Sciatic nerve (tissue), 2 donors: ENCODE measurements at regions of chr19 and their contacts with region 1.

Region 1: DNA sequence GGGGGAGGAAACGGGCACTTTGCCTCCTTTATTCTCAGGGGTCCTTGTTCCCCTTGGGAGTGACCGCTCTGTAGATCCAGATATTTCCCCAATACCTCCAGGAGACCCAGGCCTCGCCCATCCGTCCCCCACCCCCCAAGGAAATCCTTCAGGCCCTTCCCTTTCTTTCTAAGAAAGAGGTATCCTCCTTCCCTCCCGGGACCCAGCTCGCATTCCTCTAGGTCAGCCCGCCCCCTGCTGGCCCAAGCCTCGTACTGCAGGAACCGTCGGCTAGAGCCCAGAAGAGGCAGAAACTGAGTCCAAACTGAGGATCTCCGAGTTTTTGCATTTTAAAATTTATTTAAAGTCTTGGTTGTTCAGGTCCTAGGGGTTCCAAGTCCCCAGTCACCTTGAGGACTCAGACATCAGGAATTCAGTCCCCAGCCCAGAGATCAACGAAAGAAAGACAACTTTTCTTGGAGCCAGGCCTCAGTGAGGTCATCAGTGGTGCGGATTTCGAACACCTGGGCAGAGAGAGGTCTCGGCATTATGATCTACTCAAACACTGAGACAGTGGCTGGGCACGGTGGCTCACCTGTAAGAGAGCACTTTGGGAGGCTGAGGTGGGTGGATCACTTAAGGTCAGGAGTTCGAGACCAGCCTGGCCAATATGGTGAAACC is 7.5 kb upstream of the LRFN1 start:
- DNase-seq: peak; percentile 95
- ATAC-seq: peak; percentile 92

Region 2: DNA sequence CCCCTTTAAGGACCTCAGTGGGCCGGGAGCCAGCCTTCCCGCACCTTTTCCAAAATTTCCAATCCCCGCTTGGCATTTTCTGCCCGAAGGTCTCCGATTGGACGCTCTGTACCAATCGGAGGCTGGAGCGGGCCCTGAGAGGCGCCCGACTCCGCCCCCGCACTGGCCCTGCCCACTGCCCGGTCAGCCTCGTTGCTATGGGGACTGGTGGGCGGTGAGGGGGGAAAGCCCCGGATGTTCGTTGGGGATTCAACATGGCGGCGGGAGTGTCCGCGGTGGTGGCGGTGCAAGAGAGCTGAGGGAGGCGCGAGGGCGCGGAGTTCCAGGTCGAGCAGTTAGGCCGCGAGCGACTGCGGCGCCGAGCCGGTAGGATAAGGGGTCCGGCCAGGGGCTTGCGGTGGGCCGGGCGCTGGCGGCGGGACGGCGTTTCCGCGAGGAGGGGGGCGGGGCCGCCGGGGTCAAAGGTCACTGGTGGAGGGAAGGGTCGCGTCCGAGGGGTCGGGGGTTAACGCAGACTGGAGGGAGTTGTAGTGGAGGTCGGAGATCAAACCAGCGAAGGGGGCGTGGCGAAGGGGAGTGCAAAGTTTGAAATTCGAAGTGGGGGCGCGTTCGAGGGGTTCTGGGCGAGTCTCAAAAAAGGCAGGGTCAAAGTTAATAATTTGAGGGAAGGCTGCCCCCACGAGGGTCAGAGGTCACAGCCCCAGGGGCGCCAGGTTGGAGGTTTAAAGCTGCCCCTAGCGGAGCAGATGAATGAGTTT is 202.4 kb before region 1 on chr19 and contains the start of gene PAK4:
- intact Hi-C with region 1: loop called (anchors 5 kb)
- DNase-seq: peak; percentile 99
- ATAC-seq: peak; percentile 99
- total RNA-seq, gene PAK4: 43.5 TPM